ENCODE measurements at regions of chr11 and their contacts with region 1.

Region 1: DNA sequence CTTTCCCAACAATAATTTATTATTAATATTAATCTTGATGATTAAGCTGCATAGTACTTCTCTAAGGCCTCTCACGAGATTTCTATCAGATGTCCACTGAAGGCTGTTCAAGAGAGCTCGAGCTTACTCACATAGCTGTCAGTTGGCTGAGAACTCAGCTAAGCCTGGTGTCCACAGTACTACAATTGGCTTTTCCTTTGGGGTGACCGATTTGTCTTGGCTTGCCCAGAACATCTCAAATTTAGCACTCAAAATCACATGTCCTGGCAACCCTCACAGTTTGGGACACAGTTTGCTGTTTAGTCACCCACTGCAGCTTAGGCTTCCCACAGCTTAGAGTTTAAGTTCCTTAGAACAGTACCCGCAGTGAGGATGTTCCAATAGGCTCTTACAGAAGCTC is 96.5 kb downstream of the LUZP2 start:
- DNase-seq: no peak
- ATAC-seq: no peak

Region 2: DNA sequence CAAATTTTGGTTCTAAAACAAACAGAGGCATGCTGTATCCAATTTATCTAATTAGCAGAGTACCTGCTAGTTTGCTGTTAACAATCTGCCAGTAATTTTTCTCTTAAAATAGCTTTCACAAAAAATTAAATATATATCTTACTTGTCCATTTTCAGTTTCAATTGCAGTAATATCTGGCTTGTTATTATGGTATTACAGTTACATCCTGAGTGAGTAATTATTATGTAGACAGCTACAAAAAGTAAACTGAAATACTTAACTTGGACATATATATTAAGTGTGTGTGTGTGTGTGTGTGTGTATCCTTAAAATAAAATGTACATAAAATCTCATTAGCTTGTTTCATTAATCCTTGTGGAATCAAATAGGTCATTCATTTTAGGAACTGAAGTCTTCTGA is 52.2 kb after region 1 on chr11:
- intact Hi-C with region 1: loop called (anchors 2 kb)
- DNase-seq: no peak
- ATAC-seq: no peak

Measured in sciatic nerve (tissue), 2 donors.